Activated T-helper 2 cell treated with anti-CD3 and anti-CD28 coated beads, Interferon-gamma antibody, Interleukin-2, Interleukin-4, amounts not matched to agents 10 μg/mL and 5 μg/mL and 100 μg/mL, durations not matched to agents 14 hours and 24 hours and 36 hours (primary cell): ENCODE measurements at regions of chr1 and their contacts with region 1.

Region 1: DNA sequence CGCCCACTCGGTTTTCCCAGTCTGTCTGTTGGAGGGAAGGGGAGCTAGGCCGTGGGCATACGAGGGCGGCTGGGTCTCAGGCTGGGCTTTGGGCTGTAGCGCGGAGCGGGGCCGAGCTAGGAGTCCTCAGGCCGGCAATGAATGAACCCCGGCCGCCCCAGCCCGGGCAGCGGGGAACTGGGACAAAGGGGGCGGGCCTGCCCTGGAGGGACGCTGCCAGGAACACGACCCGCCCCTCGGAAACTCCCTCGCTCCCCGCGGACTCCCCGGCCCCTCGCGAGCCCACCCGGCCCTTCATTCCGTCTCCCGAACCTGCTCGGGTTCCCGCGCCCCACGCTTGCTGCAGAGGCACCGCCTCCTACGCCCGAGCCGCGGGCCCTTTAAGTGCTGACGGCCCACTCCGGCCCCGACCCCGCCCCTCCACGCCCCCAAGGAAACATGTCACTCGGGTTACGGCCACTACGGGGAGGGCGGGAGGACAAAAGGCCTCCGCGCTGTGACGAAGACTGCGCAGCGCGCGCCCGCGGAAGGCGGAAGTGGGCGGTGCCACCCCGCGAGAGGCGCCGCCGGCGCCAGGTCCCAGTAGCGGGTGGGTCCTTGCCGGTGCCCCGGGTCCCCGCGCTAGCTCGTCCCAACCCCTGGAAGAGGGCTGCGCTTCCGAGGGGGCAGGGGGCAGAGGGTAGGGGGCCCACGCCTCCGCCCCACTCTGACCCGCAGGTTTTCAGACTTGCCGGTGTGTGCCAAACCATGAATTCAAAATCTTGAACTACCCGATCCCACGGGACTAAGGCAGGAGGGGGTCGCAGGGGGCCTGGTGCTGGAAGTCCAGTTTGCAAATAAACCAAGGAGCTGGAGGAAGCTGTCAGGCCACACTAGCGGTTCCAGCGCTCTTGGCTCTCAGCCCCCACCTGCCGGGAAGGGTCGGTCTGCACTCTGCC is at the start of gene GALE:
- DNase-seq: peak; percentile 93
- H3K4me3 Mint-ChIP-seq: peak within 1 kb of the TSS; percentile 97
- H3K27ac Mint-ChIP-seq: peak within 1 kb of the TSS; percentile 86
- H3K4me1 Mint-ChIP-seq: peaks cover 11% of the 10 kb centered on the region
- H3K27me3 Mint-ChIP-seq: no peaks in the 10 kb centered on the region
- total RNA-seq, gene GALE: 57.8 and 62.1 TPM in 2 replicates

Region 2: DNA sequence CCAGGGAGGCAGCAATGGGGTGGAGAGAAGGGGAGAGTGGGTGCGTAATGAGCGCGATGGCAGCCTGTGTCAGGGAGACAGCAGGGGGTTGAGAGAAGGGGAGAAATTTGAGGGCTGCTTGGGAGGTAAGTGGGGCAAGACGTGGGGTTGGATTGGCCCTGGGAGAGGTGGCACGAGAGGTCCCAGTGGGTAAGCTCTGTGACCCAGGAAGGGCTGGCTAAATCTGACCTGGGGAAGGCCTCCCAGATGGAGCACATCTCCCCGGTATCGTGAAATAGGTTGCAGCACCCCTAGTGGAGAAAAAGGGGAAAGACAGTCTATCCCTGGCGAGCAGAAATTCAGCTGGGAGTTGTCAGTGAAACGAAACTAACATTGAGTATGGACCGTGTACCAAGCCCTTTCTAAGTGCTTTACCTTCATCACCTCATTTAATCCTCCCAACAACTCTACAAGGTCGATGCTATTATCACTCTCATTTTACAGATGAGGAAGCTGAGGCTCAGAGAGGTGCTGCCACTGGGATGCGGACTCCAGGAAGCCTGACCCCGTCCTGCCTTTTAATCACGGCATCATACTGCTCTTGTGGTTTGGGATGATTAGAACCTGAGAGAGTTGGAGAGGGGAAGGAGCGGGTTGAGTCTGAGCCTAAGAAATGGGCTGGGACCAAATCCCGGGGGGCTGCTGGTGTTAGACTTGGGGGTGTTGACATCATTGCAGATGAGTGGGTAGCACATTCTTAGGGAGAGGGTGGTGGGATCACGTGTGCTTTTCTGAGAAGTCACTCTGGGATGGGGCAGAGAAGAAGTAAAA is 165.6 kb before region 1 on chr1:
- intact Hi-C with region 1: no loop called
- DNase-seq: peak; percentile 66
- H3K4me3 Mint-ChIP-seq: peak overlapping the region; percentile 41
- H3K27ac Mint-ChIP-seq: peak overlapping the region; percentile 60
- H3K4me1 Mint-ChIP-seq: peaks cover 26% of the 10 kb centered on the region
- H3K27me3 Mint-ChIP-seq: peaks cover 5% of the 10 kb centered on the region

Region 3: GRCh38 chr1:23777979-23778814 is 22.5 kb before region 1 on chr1 and contains the start of gene PITHD1:
- intact Hi-C with region 1: loop called (anchors 1 kb)
- DNase-seq: peak; percentile 83
- H3K4me3 Mint-ChIP-seq: peak within 1 kb of the TSS; percentile 92
- H3K27ac Mint-ChIP-seq: peak within 1 kb of the TSS; percentile 94
- H3K4me1 Mint-ChIP-seq: peaks cover 31% of the 10 kb centered on the region
- H3K27me3 Mint-ChIP-seq: no peaks in the 10 kb centered on the region
- total RNA-seq, gene PITHD1: 71.4 and 72.7 TPM in 2 replicates

Region 4: DNA sequence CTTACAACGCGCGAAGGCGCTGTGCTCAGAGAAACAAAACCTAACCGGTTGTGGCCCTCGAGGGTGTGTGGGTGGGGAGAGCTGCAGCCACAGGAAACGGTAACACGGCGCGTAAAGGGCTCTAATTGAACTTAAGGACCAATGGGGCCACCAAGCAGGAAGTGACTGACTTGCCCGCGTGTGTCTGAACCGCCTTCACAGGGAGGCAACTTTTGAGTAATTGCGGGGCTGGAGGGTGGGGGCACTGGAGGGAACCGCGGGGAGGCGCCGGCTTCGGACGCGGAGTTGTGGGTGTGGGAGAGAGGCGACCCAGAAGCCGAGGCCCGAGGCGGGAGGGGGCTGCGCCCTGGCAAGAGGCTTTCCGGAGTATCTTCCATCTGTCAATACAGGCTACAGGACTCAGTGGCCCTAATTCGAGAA is 158.4 kb after region 1 on chr1:
- intact Hi-C with region 1: no loop called
- DNase-seq: peak; percentile 93
- H3K4me3 Mint-ChIP-seq: peak overlapping the region; percentile 99
- H3K27ac Mint-ChIP-seq: peak overlapping the region; percentile 100
- H3K4me1 Mint-ChIP-seq: peaks cover 54% of the 10 kb centered on the region
- H3K27me3 Mint-ChIP-seq: no peaks in the 10 kb centered on the region

Region 5: GRCh38 chr1:23979878-23980724 is 179.4 kb after region 1 on chr1 and contains the start of gene SRSF10:
- intact Hi-C with region 1: loop called (anchors 10 kb)
- DNase-seq: peak; percentile 99
- H3K4me3 Mint-ChIP-seq: peak within 1 kb of the TSS; percentile 95
- H3K27ac Mint-ChIP-seq: peak within 1 kb of the TSS; percentile 98
- H3K4me1 Mint-ChIP-seq: peaks cover 36% of the 10 kb centered on the region
- H3K27me3 Mint-ChIP-seq: no peaks in the 10 kb centered on the region
- total RNA-seq, gene SRSF10: 213 and 217 TPM in 2 replicates